Activated B cell treated with CpG ODN at 0.5 μM for 24 hours (primary cell): ENCODE measurements at regions of chr11 and their contacts with region 1.

Region 1: DNA sequence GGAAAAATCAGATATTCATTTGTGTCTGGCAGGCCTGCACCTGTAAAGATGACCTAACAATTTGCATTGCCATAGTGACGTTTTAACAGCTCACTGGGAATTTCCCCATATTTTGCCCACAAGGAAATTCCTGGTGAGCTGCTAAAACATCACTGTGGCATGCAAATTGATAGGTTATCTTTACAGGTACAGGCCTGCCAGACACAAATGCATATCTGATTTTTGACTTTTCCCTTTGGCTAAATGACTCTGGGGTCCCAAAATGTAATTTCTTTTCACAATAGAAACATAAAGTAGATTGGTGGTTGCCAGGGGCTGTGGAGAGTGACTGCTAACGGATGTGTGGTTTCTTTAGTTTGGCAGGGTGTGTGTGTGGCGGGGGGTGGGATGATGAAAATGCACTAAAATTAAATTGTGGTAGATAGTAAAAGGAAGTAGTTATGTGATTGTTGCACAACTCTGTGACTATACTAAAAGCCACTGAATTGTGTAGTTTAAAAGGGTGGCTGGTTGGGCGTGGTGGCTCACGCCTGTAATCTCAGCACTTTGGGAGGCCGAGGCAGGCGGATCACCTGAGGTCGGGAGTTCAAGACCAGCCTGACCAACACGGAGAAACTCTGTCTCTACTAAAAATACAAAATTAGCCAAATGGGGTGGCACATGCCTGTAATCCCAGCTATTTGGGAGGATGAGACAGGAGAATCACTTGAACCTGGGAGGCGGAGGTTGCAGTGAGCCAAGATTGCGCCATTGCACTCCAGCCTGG is 18.5 kb upstream of the FEZ1 start:
- DNase-seq: peak; percentile 27
- ATAC-seq: peak; percentile 80
- H3K4me3 Mint-ChIP-seq: peak overlapping the region; percentile 21
- H3K27ac Mint-ChIP-seq: peak overlapping the region; percentile 92
- H3K4me1 Mint-ChIP-seq: peaks cover 45% of the 10 kb centered on the region
- H3K27me3 Mint-ChIP-seq: no peaks in the 10 kb centered on the region
- CTCF ChIP-seq: no peak

Region 2: DNA sequence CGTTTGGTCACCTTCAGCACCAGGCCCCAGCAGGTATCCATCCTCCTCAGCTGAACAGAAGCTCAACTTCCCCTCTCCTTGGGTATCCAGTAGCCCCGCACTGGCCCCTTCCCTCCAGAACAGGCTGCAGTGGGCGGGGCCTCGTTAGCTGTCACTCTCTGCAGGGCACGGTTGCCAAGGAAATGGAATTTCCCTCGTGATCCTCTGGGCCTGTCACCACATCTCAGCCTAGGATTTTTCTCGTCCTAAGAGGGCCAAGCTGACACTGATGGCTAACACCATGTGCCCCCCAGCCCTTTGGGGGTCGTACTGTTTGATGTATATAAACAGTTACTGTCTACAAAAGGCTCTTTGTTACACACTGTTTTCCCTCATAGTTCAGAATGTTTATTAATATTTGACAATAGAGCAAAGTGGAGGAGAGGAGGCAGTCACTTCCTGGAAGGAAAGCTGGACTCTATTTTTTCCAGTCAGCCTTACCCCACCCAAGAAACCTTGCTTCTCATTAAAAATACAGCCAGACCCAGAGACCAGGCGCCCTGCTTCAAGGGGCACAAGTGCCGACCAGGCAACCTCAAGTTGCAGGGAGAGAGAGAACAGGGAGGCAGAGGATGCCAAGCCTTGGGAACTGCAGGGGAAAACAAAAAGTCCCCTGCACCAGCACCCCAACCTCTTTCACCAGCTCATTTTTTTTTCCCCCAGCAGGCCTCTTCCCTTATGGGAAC is 63.0 kb before region 1 on chr11:
- CTCF ChIA-PET with region 1: interaction called, 3 read pairs
- POLR2A ChIA-PET with region 1: no interaction called
- intact Hi-C with region 1: loop called (anchors 2 kb)
- DNase-seq: no peak
- ATAC-seq: no peak
- H3K4me3 Mint-ChIP-seq: no peak overlapping the region
- H3K27ac Mint-ChIP-seq: no peak overlapping the region
- H3K4me1 Mint-ChIP-seq: peaks cover 4% of the 10 kb centered on the region
- H3K27me3 Mint-ChIP-seq: no peaks in the 10 kb centered on the region
- CTCF ChIP-seq: no peak

Region 3: GRCh38 chr11:125568970-125569914 is 54.7 kb after region 1 on chr11 and contains the start of gene EI24:
- CTCF ChIA-PET with region 1: interaction called, 3 read pairs
- POLR2A ChIA-PET with region 1: interaction called, 5 read pairs
- intact Hi-C with region 1: loop called (anchors 1 kb)
- DNase-seq: peak; percentile 83
- ATAC-seq: peak; percentile 97
- H3K4me3 Mint-ChIP-seq: peak within 1 kb of the TSS; percentile 93
- H3K27ac Mint-ChIP-seq: peak within 1 kb of the TSS; percentile 88
- H3K4me1 Mint-ChIP-seq: peaks cover 22% of the 10 kb centered on the region
- H3K27me3 Mint-ChIP-seq: no peaks in the 10 kb centered on the region
- CTCF ChIP-seq: no peak
- total RNA-seq, gene EI24: 34.3 and 34.5 TPM in 2 replicates

Region 4: GRCh38 chr11:125625630-125626287 is 111.2 kb after region 1 on chr11:
- CTCF ChIA-PET with region 1: no interaction called
- POLR2A ChIA-PET with region 1: no interaction called
- intact Hi-C with region 1: loop called (anchors 1 kb)
- DNase-seq: peak; percentile 80
- ATAC-seq: peak; percentile 93
- H3K4me3 Mint-ChIP-seq: peak overlapping the region; percentile 91
- H3K27ac Mint-ChIP-seq: peak overlapping the region; percentile 98
- H3K4me1 Mint-ChIP-seq: peaks cover 20% of the 10 kb centered on the region
- H3K27me3 Mint-ChIP-seq: no peaks in the 10 kb centered on the region
- CTCF ChIP-seq: no peak